ENCODE measurements at regions of chr15 and their contacts with region 1.

Region 1: GRCh38 chr15:78093242-78094020 is 1.1 kb downstream of the SH2D7 start:
- DNase-seq: peak; percentile 75
- H3K4me3 ChIP-seq: no peak overlapping the region
- H3K27me3 ChIP-seq: peaks cover 10% of the 10 kb centered on the region
- CTCF ChIP-seq: no peak; the same call in 1 of the 2 replicates

Region 2: DNA sequence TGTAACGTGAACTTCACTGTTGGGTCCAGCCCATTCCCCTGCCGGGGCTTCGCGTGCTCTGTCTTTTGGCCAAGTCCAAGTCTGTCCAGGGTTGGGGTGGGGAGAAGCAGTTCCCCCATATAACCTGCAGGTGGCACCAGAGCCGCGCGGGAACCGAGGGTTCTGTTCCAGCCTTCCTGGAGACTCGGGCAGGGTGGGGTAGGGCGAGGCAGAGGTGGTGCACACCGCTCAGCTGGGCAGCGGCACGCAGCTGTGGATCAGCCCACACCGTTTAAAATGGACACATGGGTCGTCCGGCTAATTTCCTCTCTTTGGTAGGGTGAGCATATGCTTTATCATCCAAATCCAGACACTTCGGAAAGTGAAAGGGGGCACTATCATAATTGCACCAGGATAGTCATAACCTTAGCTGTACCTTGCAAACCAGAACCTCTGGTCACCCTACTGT is 134.0 kb before region 1 on chr15:
- CTCF ChIA-PET with region 1: interaction called, 10 read pairs
- POLR2A ChIA-PET with region 1: no interaction called
- DNase-seq: no peak
- H3K4me3 ChIP-seq: 0 out of 2 replicates have a peak overlapping the region, but pooled peaks have one; percentile 2
- H3K27me3 ChIP-seq: peaks cover 7% of the 10 kb centered on the region
- CTCF ChIP-seq: peak; percentile 94

Region 3: GRCh38 chr15:77966540-77967290 is 126.7 kb before region 1 on chr15:
- CTCF ChIA-PET with region 1: interaction called, 15 read pairs
- POLR2A ChIA-PET with region 1: no interaction called
- DNase-seq: no peak
- H3K4me3 ChIP-seq: no peak overlapping the region
- H3K27me3 ChIP-seq: peaks cover 4% of the 10 kb centered on the region
- CTCF ChIP-seq: peak; percentile 88

Region 4: DNA sequence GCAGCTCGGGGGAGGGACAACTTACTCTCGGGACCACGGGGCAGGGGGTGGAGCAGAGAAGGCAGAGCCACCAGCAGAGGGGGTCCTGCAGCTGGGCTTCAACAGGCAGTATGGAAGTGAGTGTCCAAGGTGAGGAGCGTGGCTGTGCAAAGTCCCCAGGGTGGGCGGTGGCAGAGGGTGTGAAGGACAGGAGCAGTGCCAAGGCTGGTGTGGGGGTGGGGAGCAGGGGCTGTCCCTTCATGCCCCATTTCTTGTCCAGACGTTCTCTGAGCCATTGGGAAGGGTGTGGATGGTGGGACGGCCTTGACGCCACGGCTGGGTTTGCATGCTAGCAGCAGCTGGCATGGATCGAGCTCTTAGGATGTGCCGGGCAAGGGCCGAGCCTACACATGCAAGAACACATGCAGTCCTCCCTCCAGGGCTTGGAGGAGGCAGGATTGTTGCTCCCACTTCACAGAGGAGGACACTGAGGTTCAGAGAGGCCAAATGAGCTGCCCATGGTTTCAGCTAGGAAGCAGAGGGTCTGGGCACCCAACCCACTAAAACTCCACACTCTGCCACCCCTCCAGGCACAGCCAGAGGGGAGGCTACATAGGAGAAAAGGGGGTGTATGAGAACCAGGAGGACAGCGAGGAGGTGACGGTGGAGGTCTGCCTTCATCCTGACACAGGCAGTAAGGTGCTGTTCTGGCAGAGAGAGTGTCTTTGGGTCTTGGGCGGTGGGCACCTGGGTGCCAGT is 109.6 kb before region 1 on chr15:
- CTCF ChIA-PET with region 1: no interaction called
- POLR2A ChIA-PET with region 1: no interaction called
- DNase-seq: no peak
- H3K4me3 ChIP-seq: no peak overlapping the region
- H3K27me3 ChIP-seq: no peaks in the 10 kb centered on the region
- CTCF ChIP-seq: peak; percentile 23; the same call in 1 of the 2 replicates

Measured in BJ (cell line).